CD8-positive, alpha-beta T cell (primary cell): ENCODE measurements at regions of chr13 and their contacts with region 1.

Region 1: GRCh38 chr13:44790289-44790688 is 199.0 kb downstream of the NUFIP1 start:
- DNase-seq: no peak
- ATAC-seq: no peak
- H3K4me3 ChIP-seq: no peak overlapping the region
- H3K4me3 Mint-ChIP-seq: no peak overlapping the region
- H3K27ac ChIP-seq: no peak overlapping the region
- H3K27ac Mint-ChIP-seq: no peak overlapping the region
- H3K4me1 ChIP-seq: no peaks in the 10 kb centered on the region
- H3K4me1 Mint-ChIP-seq: no peaks in the 10 kb centered on the region
- H3K27me3 ChIP-seq: no peaks in the 10 kb centered on the region
- H3K27me3 Mint-ChIP-seq: no peaks in the 10 kb centered on the region
- CTCF ChIP-seq: no peak

Region 2: DNA sequence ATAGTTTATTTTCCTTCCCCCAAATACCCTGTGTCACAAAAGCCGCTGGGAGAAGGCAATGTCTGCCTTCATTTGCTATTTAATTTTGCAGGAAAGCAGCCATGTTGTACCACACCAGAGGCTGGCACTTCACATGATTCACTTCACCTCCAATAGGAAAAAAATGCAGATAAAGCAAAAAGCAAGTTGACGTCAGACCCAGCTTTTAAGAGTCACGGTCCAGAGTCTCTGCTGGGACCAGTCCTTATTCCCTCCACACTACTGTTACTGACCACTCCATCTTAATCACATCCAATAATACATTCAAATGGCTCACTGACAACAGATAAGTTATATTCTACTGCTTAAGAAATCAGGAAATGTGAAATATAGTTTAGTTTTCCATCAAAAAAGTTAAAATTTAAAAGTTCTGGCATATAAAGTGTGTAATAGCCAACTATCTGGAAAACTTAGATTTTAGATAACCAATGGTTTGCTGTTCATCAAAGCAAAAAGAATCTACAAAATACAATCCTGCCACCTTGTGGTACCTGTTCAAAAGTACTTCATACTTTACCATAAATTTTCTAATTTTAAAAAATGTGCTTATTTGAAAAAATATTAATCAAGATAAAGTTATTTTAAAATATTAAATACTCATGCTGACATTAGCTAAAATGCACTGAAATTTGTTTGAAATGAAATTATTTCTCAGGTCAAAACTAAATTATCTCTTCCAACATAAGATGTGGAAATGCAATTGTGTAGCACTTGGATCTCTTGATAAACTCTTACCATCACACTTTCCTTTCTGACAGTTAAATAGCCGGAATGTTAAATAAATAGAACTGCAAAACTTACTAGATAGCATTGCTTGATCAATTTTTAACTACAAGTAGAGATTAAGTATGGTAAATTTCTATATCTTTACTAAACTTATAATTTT is 319.4 kb before region 1 on chr13:
- CTCF ChIA-PET with region 1: no interaction called
- POLR2A ChIA-PET with region 1: no interaction called
- intact Hi-C with region 1: no loop called
- DNase-seq: peak in 2 of 9 experiments; percentile 41 to 53
- ATAC-seq: no peak
- H3K4me3 ChIP-seq: no peak overlapping the region
- H3K4me3 Mint-ChIP-seq: no peak overlapping the region
- H3K27ac ChIP-seq: no peak overlapping the region
- H3K27ac Mint-ChIP-seq: no peak overlapping the region
- H3K4me1 ChIP-seq: no peaks in the 10 kb centered on the region
- H3K4me1 Mint-ChIP-seq: peaks cover 3% of the 10 kb centered on the region
- H3K27me3 ChIP-seq: no peaks in the 10 kb centered on the region
- H3K27me3 Mint-ChIP-seq: no peaks in the 10 kb centered on the region
- CTCF ChIP-seq: peak; percentile 47

Region 3: DNA sequence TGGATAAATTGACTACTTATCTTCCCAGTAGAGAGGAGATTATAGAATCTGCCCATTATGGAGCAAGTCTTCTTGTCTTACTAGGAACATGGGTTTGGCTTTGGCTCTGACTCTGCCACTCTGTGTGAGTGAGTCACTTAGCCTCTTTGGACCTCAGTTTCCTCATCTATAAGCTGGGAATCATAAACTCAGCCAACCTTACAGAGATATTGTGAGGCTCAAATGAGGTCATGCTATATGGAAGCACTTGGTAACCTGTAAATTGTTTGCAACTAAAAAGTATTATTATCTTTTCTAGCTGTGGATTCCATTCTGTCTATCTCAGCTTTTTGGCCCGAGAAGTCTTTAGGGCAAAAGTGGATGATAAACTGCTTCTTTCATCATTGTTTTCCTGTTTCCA is 27.4 kb before region 1 on chr13:
- CTCF ChIA-PET with region 1: interaction called, 3 read pairs
- POLR2A ChIA-PET with region 1: no interaction called
- intact Hi-C with region 1: loop called in 1 of 2 experiments (anchors 1 kb)
- DNase-seq: no peak
- ATAC-seq: no peak
- H3K4me3 ChIP-seq: no peak overlapping the region
- H3K4me3 Mint-ChIP-seq: no peak overlapping the region
- H3K27ac ChIP-seq: no peak overlapping the region
- H3K27ac Mint-ChIP-seq: no peak overlapping the region
- H3K4me1 ChIP-seq: peaks cover 2% of the 10 kb centered on the region
- H3K4me1 Mint-ChIP-seq: peaks cover 3% of the 10 kb centered on the region
- H3K27me3 ChIP-seq: no peaks in the 10 kb centered on the region
- H3K27me3 Mint-ChIP-seq: peaks cover 3% of the 10 kb centered on the region
- CTCF ChIP-seq: no peak

Region 4: DNA sequence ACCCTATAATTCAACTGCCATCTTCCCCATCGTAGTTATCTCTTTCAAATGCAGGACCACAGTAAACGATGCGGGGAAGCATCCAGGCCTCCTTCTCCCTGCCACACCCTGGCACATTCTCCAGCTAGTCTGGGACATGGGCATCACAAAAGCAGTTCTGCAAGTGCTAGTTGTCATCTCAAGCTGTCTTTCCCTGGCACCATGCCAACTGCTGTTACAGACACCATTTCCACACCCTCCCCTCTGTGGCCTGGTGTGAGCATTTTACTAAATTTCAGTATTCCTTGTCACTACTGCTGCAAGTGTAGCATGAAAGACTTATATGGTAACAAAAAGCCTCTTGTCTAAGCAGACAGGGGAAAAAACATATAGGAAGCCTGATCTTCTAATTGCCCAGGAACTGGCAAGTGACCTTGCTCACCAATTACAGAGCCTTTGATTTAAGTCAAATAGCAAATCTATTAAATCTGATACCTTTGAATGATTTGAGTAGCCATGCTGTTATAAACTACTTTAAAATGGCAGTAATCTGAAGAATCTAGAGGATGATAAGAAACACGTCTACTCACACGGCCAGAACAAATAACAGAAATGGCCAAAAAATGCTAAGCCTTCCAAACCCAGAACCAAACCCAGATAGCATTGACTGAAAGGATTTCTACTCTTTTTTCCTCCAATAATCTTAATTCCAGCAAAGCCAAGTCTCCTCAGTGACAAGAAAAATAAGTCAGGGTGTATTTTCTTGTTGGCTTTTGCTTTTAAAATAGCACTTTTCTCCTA is 20.0 kb after region 1 on chr13:
- CTCF ChIA-PET with region 1: no interaction called
- POLR2A ChIA-PET with region 1: no interaction called
- intact Hi-C with region 1: no loop called
- DNase-seq: peak in 2 of 9 experiments; percentile 7 to 8
- ATAC-seq: no peak
- H3K4me3 ChIP-seq: no peak overlapping the region
- H3K4me3 Mint-ChIP-seq: no peak overlapping the region
- H3K27ac ChIP-seq: no peak overlapping the region
- H3K27ac Mint-ChIP-seq: no peak overlapping the region
- H3K4me1 ChIP-seq: no peaks in the 10 kb centered on the region
- H3K4me1 Mint-ChIP-seq: no peaks in the 10 kb centered on the region
- H3K27me3 ChIP-seq: no peaks in the 10 kb centered on the region
- H3K27me3 Mint-ChIP-seq: peaks cover 1% of the 10 kb centered on the region
- CTCF ChIP-seq: no peak

Region 5: GRCh38 chr13:44837250-44837649 is 47.0 kb after region 1 on chr13:
- CTCF ChIA-PET with region 1: no interaction called
- POLR2A ChIA-PET with region 1: no interaction called
- intact Hi-C with region 1: loop called in 1 of 2 experiments (anchors 1 kb)
- DNase-seq: no peak
- ATAC-seq: no peak
- H3K4me3 ChIP-seq: no peak overlapping the region
- H3K4me3 Mint-ChIP-seq: no peak overlapping the region
- H3K27ac ChIP-seq: no peak overlapping the region
- H3K27ac Mint-ChIP-seq: no peak overlapping the region
- H3K4me1 ChIP-seq: no peaks in the 10 kb centered on the region
- H3K4me1 Mint-ChIP-seq: no peaks in the 10 kb centered on the region
- H3K27me3 ChIP-seq: no peaks in the 10 kb centered on the region
- H3K27me3 Mint-ChIP-seq: peaks cover 5% of the 10 kb centered on the region
- CTCF ChIP-seq: no peak